ENCODE measurements at regions of chr6 and their contacts with region 1.

Region 1: GRCh38 chr6:44127186-44128019 is at the starts of genes MRPL14 and TMEM63B:
- DNase-seq: peak; percentile 92
- ATAC-seq: peak; percentile 77
- H3K4me3 ChIP-seq: peak within 1 kb of the TSS; percentile 95
- H3K27ac ChIP-seq: peak within 1 kb of the TSS; percentile 50
- H3K4me1 ChIP-seq: peaks cover 45% of the 10 kb centered on the region
- H3K27me3 ChIP-seq: no peaks in the 10 kb centered on the region
- CTCF ChIP-seq: no peak
- total RNA-seq, gene MRPL14: 164 and 192 TPM in 2 replicates
- total RNA-seq, gene TMEM63B: 23.6 and 26.9 TPM in 2 replicates

Region 2: GRCh38 chr6:43687437-43688347 is 439.7 kb before region 1 on chr6 and contains the start of gene MRPS18A:
- CTCF ChIA-PET with region 1: no interaction called
- POLR2A ChIA-PET with region 1: interaction called, 11 read pairs
- intact Hi-C with region 1: no loop called
- DNase-seq: peak; percentile 90
- ATAC-seq: peak; percentile 95
- H3K4me3 ChIP-seq: peak within 1 kb of the TSS; percentile 93
- H3K27ac ChIP-seq: peak within 1 kb of the TSS; percentile 70
- H3K4me1 ChIP-seq: peaks cover 26% of the 10 kb centered on the region
- H3K27me3 ChIP-seq: no peaks in the 10 kb centered on the region
- CTCF ChIP-seq: no peak
- total RNA-seq, gene MRPS18A: 91.5 and 105 TPM in 2 replicates

Region 3: DNA sequence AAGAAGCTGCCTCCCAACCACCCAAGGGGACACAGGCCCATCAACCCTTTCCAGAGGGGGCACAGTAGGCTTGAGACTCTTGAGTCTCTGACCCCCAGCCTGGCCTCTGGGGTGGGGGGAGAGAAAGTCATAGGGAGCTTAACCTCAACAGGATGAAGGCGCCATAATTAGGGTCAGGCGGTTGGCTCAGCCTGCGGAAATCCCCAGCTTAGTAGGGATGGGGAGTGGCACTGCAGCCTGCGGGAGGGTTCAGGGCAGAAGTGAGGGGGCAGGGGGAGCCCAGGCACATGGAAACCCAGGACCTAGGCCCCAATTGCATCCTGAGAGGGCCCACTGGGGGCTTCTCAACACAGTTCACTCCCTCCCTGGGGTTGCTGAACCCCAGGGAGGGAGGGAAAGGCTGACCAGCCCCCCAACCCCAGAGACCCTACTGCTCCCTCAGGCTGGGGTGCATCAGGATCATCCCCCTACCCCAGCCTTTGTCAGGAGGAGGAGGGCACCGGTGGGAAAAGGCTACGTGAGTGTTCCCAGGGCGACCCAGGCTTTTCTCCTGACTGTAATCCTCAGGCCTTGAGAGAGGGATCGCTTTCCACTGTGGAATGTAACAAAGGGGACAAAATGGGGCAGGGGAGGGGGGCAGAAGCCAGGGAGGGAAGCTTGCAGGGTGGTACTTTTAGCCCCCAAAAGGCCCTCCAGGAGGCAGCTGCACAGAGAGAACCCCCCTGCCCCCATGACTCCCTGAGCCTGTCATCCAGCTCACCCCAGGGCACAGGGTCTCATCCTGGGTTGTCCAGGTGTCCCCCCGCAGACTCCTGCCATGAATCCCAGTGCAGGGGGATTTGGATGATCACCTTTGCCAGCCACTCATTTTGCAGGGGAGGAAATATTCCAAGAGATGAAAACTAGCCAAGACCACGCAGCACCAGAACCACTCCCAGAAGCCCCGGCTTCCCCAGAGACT is 46.6 kb before region 1 on chr6:
- CTCF ChIA-PET with region 1: no interaction called
- POLR2A ChIA-PET with region 1: interaction called, 11 read pairs
- intact Hi-C with region 1: no loop called
- DNase-seq: no peak
- ATAC-seq: no peak
- H3K4me3 ChIP-seq: no peak overlapping the region
- H3K27ac ChIP-seq: no peak overlapping the region
- H3K4me1 ChIP-seq: no peaks in the 10 kb centered on the region; the same call in 1 of the 2 replicates
- H3K27me3 ChIP-seq: no peaks in the 10 kb centered on the region
- CTCF ChIP-seq: no peak